Gastrocnemius medialis (tissue), 4 donors: ENCODE measurements at regions of chr2 and their contacts with region 1.

Region 1: GRCh38 chr2:230537531-230537976 is 121.6 kb downstream of the SP100 start:
- DNase-seq: no peak
- ATAC-seq: no peak
- H3K4me3 ChIP-seq: no peak overlapping the region
- H3K27ac ChIP-seq: no peak overlapping the region
- H3K4me1 ChIP-seq: no peaks in the 10 kb centered on the region
- H3K27me3 ChIP-seq: no peaks in the 10 kb centered on the region
- CTCF ChIP-seq: no peak
- POLR2A ChIP-seq: no peak

Region 2: GRCh38 chr2:230552181-230552580 is 14.6 kb after region 1 on chr2:
- in situ Hi-C with region 1: no loop called
- intact Hi-C with region 1: loop called (anchors 1 kb)
- DNase-seq: no peak
- ATAC-seq: no peak
- H3K4me3 ChIP-seq: no peak overlapping the region
- H3K27ac ChIP-seq: no peak overlapping the region
- H3K4me1 ChIP-seq: no peaks in the 10 kb centered on the region
- H3K27me3 ChIP-seq: no peaks in the 10 kb centered on the region
- CTCF ChIP-seq: no peak
- POLR2A ChIP-seq: no peak